Heart left ventricle (tissue), 16 donors: ENCODE measurements at regions of chr4 and their contacts with region 1.

Region 1: DNA sequence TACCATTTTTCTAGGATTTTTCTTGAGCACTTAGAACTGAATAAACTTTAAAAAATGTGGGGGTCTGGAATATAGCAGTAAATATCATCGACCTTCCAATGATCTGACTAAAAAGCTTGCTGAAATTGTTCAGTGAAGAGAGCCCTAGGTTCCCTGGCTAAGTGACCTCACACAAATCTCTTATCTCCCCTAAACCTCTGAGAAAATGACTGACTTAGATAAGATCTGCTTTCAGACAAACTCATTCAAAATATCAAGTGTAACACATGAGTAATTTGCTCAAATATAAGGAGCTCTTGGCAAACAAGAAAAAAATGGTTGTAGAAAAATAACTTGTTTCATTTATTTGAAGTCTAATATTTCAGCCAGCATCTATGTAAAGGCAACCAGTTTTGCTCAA is 441.7 kb upstream of the SLIT2 start:
- DNase-seq: no peak
- ATAC-seq: no peak
- H3K4me3 ChIP-seq: no peak overlapping the region
- H3K27ac ChIP-seq: no peak overlapping the region
- H3K4me1 ChIP-seq: no peaks in the 10 kb centered on the region
- H3K27me3 ChIP-seq: no peaks in the 10 kb centered on the region
- CTCF ChIP-seq: no peak
- POLR2A ChIP-seq: no peak

Region 2: DNA sequence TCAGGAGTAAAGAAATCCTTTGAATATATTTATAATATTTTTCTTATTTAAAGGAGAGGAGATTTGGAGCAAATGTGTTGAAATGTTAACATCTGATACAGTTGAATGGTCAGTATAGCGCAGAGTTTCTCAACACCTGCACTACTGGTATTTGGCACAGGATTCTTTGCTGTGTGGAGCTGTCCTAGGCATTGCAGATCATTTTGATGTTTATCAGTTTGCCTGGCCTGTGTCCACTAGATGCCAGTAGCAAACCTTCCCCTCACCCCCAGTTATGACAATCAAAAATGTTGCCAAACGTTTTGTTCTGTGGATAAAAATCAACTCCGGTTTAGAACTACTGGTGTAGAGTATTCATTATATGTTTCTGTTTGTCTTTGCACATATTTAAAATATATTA is 323.6 kb before region 1 on chr4:
- intact Hi-C with region 1: loop called in 1 of 10 experiments (anchors 5 kb)
- DNase-seq: no peak
- ATAC-seq: no peak
- H3K4me3 ChIP-seq: no peak overlapping the region
- H3K27ac ChIP-seq: no peak overlapping the region
- H3K4me1 ChIP-seq: no peaks in the 10 kb centered on the region
- H3K27me3 ChIP-seq: no peaks in the 10 kb centered on the region
- CTCF ChIP-seq: no peak
- POLR2A ChIP-seq: no peak

Region 3: GRCh38 chr4:19880206-19880605 is 70.2 kb after region 1 on chr4:
- intact Hi-C with region 1: no loop called
- DNase-seq: peak in 2 of 5 donors; percentile 20 to 24
- ATAC-seq: peak in 2 of 4 donors; percentile 26 to 33
- H3K4me3 ChIP-seq: no peak overlapping the region
- H3K27ac ChIP-seq: no peak overlapping the region
- H3K4me1 ChIP-seq: peaks cover 0 to 4% (median 0%) of the 10 kb centered on the region in 12 donors
- H3K27me3 ChIP-seq: no peaks in the 10 kb centered on the region
- CTCF ChIP-seq: no peak
- POLR2A ChIP-seq: no peak